ENCODE measurements at regions of chr13 and their contacts with region 1.

Region 1: GRCh38 chr13:99380921-99381645 is 73.9 kb upstream of the GPR183 start:
- DNase-seq: peak; percentile 89
- ATAC-seq: peak; percentile 78
- H3K4me3 Mint-ChIP-seq: no peak overlapping the region
- H3K27ac Mint-ChIP-seq: peak overlapping the region; percentile 96
- H3K4me1 Mint-ChIP-seq: peaks cover 89% of the 10 kb centered on the region
- H3K27me3 Mint-ChIP-seq: no peaks in the 10 kb centered on the region

Region 2: GRCh38 chr13:99176309-99177276 is 204.5 kb before region 1 on chr13:
- CTCF ChIA-PET with region 1: interaction called, 7 read pairs
- POLR2A ChIA-PET with region 1: no interaction called
- intact Hi-C with region 1: loop called in 1 of 2 experiments (anchors 2 kb)
- DNase-seq: peak; percentile 86
- ATAC-seq: peak; percentile 91
- H3K4me3 Mint-ChIP-seq: peak overlapping the region; percentile 51
- H3K27ac Mint-ChIP-seq: no peak overlapping the region
- H3K4me1 Mint-ChIP-seq: peaks cover 41% of the 10 kb centered on the region
- H3K27me3 Mint-ChIP-seq: no peaks in the 10 kb centered on the region

Region 3: DNA sequence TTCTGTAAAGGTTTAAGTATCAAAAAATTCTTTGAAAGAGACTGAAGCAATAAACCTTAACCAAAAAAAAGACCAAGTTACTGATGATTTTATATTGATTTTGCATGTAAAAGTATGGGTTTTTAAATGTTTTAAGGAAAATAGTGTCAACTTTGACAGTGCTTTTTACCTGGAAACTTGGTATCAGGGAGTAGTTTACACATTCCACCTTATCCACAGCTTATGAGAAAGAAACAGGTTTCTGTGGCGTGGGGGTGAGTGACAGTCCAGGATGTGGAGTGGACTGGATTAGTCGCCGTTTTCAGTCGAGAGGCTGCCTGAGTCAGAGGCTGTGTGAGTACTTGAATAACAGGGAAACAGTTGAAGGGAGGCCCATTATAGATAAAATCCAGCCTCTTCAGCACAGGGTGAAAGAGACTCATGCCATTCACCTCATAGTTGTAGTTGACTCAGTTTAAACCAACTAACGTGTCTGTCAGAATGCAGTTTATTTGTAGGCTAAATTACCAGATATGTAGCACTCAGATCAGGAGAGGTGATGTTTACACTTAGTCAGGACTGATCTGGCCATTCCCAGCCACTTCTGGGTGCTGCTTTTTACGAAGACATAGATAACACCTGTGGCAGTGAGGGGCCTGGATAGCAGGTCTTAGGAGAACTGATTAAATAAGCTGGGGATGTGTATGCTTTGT is 73.3 kb before region 1 on chr13:
- CTCF ChIA-PET with region 1: interaction called, 6 read pairs
- POLR2A ChIA-PET with region 1: interaction called, 10 read pairs
- intact Hi-C with region 1: loop called in 1 of 2 experiments (anchors 2 kb)
- DNase-seq: peak; percentile 88
- ATAC-seq: peak; percentile 82
- H3K4me3 Mint-ChIP-seq: peak overlapping the region; percentile 85
- H3K27ac Mint-ChIP-seq: peak overlapping the region; percentile 98
- H3K4me1 Mint-ChIP-seq: peaks cover 73% of the 10 kb centered on the region
- H3K27me3 Mint-ChIP-seq: no peaks in the 10 kb centered on the region

Region 4: GRCh38 chr13:99322297-99323103 is 58.6 kb before region 1 on chr13:
- CTCF ChIA-PET with region 1: interaction called, 16 read pairs
- POLR2A ChIA-PET with region 1: interaction called, 6 read pairs
- intact Hi-C with region 1: loop called (anchors 1 to 2 kb)
- DNase-seq: peak; percentile 66
- ATAC-seq: peak; percentile 78
- H3K4me3 Mint-ChIP-seq: peak overlapping the region; percentile 26
- H3K27ac Mint-ChIP-seq: peak overlapping the region; percentile 93
- H3K4me1 Mint-ChIP-seq: peaks cover 81% of the 10 kb centered on the region
- H3K27me3 Mint-ChIP-seq: no peaks in the 10 kb centered on the region

Region 5: DNA sequence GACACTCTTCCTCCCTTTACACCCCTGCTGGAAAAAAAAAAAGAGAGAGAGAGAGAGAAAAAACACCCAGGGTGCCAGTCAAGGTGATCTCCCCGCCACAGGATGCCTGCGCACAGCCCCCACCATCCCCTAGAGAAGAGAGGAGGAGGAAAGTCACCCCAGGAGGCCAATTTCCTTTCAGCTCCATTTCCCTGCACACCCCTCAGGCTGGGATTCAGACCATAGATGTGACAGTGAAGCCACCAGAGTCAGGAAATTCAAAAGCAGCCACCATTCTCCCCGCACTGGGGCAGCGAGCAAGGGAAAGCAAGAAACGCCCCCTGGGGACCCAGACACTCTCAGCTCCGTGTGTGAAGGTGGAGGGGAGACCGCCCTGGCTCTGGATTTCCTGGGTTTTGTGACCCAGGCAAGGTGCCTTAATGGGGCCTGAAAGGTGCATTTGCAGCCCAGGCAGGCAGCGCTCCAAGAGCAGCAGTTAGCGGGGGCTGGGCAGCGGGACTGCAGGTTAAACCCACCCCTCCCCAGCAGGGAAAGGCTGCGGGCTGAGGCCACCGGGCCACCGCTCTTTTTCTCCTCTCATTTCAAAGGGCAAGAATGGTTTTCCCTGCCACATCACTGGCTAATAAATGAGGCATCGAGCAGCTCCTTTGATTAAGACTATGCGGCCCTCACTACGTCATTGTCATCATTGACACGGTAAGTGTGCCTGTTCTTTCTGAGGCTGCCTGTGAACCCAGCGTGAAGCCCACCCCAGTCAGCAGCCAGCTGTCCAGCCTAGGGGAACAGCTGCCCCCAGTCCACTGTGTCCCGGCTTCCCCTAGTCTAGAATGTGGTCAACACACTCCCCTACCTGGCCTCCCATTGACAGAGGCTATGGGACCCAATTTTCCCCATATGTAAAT is 36.4 kb after region 1 on chr13:
- CTCF ChIA-PET with region 1: interaction called, 16 read pairs
- POLR2A ChIA-PET with region 1: interaction called, 5 read pairs
- intact Hi-C with region 1: loop called (anchors 2 to 5 kb)
- DNase-seq: peak; percentile 57
- ATAC-seq: peak; percentile 2
- H3K4me3 Mint-ChIP-seq: no peak overlapping the region
- H3K27ac Mint-ChIP-seq: no peak overlapping the region
- H3K4me1 Mint-ChIP-seq: peaks cover 62% of the 10 kb centered on the region
- H3K27me3 Mint-ChIP-seq: no peaks in the 10 kb centered on the region

Region 6: GRCh38 chr13:99758460-99759162 is 377.5 kb after region 1 on chr13:
- CTCF ChIA-PET with region 1: no interaction called
- POLR2A ChIA-PET with region 1: no interaction called
- intact Hi-C with region 1: no loop called
- DNase-seq: no peak
- ATAC-seq: no peak
- H3K4me3 Mint-ChIP-seq: no peak overlapping the region
- H3K27ac Mint-ChIP-seq: no peak overlapping the region
- H3K4me1 Mint-ChIP-seq: no peaks in the 10 kb centered on the region
- H3K27me3 Mint-ChIP-seq: no peaks in the 10 kb centered on the region